ENCODE measurements at regions of chr9 and their contacts with region 1.

Region 1: GRCh38 chr9:100352727-100353505 is at the start of gene TEX10:
- DNase-seq: peak; percentile 89
- ATAC-seq: peak; percentile 93
- H3K4me3 Mint-ChIP-seq: peak within 1 kb of the TSS; percentile 90
- H3K27ac Mint-ChIP-seq: peak within 1 kb of the TSS; percentile 87
- H3K4me1 Mint-ChIP-seq: peaks cover 67% of the 10 kb centered on the region
- H3K27me3 Mint-ChIP-seq: no peaks in the 10 kb centered on the region
- CTCF ChIP-seq: no peak
- total RNA-seq, gene TEX10: 26.5 and 28.7 TPM in 2 replicates

Region 2: GRCh38 chr9:100341889-100342288 is 11.0 kb before region 1 on chr9:
- CTCF ChIA-PET with region 1: interaction called, 3 read pairs
- POLR2A ChIA-PET with region 1: interaction called, 11 read pairs
- intact Hi-C with region 1: no loop called
- DNase-seq: no peak
- ATAC-seq: no peak
- H3K4me3 Mint-ChIP-seq: no peak overlapping the region
- H3K27ac Mint-ChIP-seq: no peak overlapping the region
- H3K4me1 Mint-ChIP-seq: peaks cover 30% of the 10 kb centered on the region
- H3K27me3 Mint-ChIP-seq: no peaks in the 10 kb centered on the region
- CTCF ChIP-seq: no peak

Region 3: DNA sequence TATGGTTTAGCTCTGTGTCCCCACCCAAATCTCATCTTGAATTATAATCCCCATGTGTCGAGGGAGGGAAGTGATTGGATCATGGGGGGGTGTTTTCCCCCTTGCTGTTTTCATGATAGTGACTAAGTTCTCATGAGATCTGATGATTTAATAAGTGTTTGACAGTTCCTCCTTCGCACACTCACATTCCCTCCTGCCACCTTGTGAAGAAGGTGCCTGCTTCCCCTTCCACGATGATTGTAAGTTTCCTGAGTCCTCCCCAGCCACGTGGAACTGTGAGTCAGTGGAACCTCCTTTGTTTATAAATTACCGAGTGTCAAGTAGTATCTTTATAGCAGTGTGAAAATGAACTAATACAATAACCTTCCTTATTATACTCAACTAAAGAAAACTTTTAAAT is 24.1 kb after region 1 on chr9:
- CTCF ChIA-PET with region 1: no interaction called
- POLR2A ChIA-PET with region 1: no interaction called
- intact Hi-C with region 1: no loop called
- DNase-seq: no peak
- ATAC-seq: no peak
- H3K4me3 Mint-ChIP-seq: no peak overlapping the region
- H3K27ac Mint-ChIP-seq: no peak overlapping the region
- H3K4me1 Mint-ChIP-seq: no peaks in the 10 kb centered on the region
- H3K27me3 Mint-ChIP-seq: no peaks in the 10 kb centered on the region
- CTCF ChIP-seq: no peak

Region 4: DNA sequence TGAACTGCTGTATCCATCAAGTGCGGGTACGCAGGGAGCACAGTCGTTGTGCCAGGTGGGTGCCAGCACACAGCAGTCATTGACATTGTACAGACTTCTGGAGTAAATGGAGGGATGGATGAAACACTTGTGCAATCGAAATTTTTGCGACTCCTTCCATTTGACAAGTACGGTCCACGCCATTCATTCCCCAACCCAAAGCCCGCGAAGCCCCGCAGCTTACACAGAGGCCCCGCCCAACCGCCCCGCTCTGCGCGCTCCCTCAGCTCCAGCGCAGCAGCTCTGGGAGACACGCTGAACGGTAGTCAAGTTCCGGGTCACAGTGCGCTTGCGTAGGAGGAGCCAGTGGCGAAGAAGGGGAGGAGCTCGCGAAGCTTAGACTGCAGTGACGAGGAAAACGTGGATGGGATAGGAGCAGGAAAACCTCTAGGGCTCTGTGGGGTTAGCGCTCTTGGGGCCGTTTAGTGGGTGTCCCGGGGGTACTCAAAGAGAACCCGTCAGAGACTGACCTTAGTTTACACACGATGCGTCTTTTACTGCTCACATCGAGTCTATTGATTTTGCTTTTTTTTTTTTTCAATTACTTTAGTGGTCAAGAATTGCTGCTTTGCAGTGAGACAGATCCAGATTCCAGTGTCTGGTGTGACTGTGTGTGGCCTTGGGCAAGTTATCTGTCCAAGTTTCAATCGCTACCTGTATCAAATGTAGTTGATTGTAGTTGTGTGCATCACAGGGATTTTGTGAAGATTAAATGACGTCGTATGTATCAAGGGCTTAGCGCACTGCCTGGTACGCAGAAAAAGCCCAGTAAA is 58.8 kb after region 1 on chr9:
- CTCF ChIA-PET with region 1: no interaction called
- POLR2A ChIA-PET with region 1: interaction called, 5 read pairs
- intact Hi-C with region 1: loop called (anchors 1 kb)
- DNase-seq: peak; percentile 76
- ATAC-seq: peak; percentile 100
- H3K4me3 Mint-ChIP-seq: peak overlapping the region; percentile 89
- H3K27ac Mint-ChIP-seq: peak overlapping the region; percentile 78
- H3K4me1 Mint-ChIP-seq: peaks cover 14% of the 10 kb centered on the region
- H3K27me3 Mint-ChIP-seq: peaks cover 9% of the 10 kb centered on the region
- CTCF ChIP-seq: no peak

Measured in activated B cell treated with CpG ODN at 0.5 μM for 24 hours (primary cell).